ENCODE measurements at regions of chr6 and their contacts with region 1.

Region 1: GRCh38 chr6:110981202-110981600 is 637 bp upstream of the RPF2 start:
- DNase-seq: peak in 1 of 2 donors; percentile 50
- ATAC-seq: no peak
- H3K4me3 ChIP-seq: peak overlapping the region; percentile 76
- H3K4me3 Mint-ChIP-seq: peak overlapping the region; percentile 95
- H3K27ac ChIP-seq: peak overlapping the region; percentile 77
- H3K27ac Mint-ChIP-seq: peak overlapping the region; percentile 95 to 99
- H3K4me1 ChIP-seq: peaks cover 15% of the 10 kb centered on the region
- H3K4me1 Mint-ChIP-seq: peaks cover 33 to 43% of the 10 kb centered on the region in 2 donors
- H3K27me3 ChIP-seq: no peaks in the 10 kb centered on the region
- H3K27me3 Mint-ChIP-seq: no peaks in the 10 kb centered on the region
- CTCF ChIP-seq: no peak

Region 2: GRCh38 chr6:110873981-110874879 is 107.0 kb before region 1 on chr6 and contains the start of gene AMD1:
- intact Hi-C with region 1: loop called (anchors 5 kb)
- DNase-seq: peak; percentile 94 to 98
- ATAC-seq: peak; percentile 68 to 90 (median 80)
- H3K4me3 ChIP-seq: peak within 1 kb of the TSS; percentile 82
- H3K4me3 Mint-ChIP-seq: peak within 1 kb of the TSS; percentile 98
- H3K27ac ChIP-seq: peak within 1 kb of the TSS; percentile 87
- H3K27ac Mint-ChIP-seq: peak within 1 kb of the TSS; percentile 96 to 97
- H3K4me1 ChIP-seq: peaks cover 24% of the 10 kb centered on the region
- H3K4me1 Mint-ChIP-seq: peaks cover 34 to 43% of the 10 kb centered on the region in 2 donors
- H3K27me3 ChIP-seq: no peaks in the 10 kb centered on the region
- H3K27me3 Mint-ChIP-seq: no peaks in the 10 kb centered on the region
- CTCF ChIP-seq: no peak
- total RNA-seq, gene AMD1: 109 to 175 (median 113) TPM

Region 3: DNA sequence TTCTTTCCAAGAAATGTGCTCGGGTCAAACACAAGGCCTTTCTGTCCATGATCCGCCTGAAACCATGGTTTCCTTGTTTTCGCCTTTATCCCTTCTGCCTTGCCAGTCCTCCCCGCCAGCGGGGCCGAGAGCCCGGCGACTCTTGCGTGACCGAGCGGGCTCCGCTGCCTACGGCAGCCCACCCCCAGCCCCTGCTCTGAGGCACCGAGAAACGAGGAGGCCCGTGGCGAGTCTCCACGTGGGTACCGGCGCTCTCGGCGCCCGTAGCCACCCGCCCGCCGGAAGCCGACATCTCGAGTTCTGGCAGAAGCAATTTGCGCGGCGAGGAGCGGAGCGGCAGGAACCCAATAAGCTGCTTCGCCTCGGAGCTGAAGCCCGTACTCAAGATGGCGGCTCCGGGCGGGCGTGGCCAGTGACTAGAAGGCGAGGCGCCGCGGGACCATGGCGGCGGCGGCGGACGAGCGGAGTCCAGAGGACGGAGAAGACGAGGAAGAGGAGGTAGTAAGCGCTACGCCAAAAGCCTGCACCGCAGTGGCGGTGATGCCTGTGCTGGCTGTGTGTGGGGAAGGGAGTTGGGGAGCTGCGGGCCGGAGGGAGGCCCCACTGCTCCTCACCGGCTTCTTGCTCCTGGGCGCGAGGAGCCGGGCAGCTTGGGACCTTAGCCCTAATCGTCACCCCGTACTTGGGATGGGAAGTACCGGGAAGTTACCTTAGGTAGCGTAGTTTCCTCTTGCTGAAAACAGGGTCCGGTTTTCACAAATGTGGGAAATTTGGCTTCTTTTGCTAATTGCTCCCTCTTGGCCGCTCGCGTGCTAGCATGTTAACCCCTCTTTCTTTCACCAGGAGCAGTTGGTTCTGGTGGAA is 22.6 kb before region 1 on chr6 and contains the start of gene GTF3C6:
- intact Hi-C with region 1: loop called (anchors 1 kb)
- DNase-seq: peak; percentile 89 to 95
- ATAC-seq: peak; percentile 99 to 100 (median 99)
- H3K4me3 ChIP-seq: peak within 1 kb of the TSS; percentile 100
- H3K4me3 Mint-ChIP-seq: peak within 1 kb of the TSS; percentile 96
- H3K27ac ChIP-seq: peak within 1 kb of the TSS; percentile 91
- H3K27ac Mint-ChIP-seq: peak within 1 kb of the TSS; percentile 91 to 98
- H3K4me1 ChIP-seq: peaks cover 14% of the 10 kb centered on the region
- H3K4me1 Mint-ChIP-seq: peaks cover 16 to 21% of the 10 kb centered on the region in 2 donors
- H3K27me3 ChIP-seq: no peaks in the 10 kb centered on the region
- H3K27me3 Mint-ChIP-seq: peaks cover 0 to 3% of the 10 kb centered on the region in 2 donors
- CTCF ChIP-seq: no peak
- total RNA-seq, gene GTF3C6: 28.2 to 36.0 (median 33.8) TPM

Measured in natural killer cell (primary cell).